ENCODE measurements at regions of chr17 and their contacts with region 1.

Region 1: DNA sequence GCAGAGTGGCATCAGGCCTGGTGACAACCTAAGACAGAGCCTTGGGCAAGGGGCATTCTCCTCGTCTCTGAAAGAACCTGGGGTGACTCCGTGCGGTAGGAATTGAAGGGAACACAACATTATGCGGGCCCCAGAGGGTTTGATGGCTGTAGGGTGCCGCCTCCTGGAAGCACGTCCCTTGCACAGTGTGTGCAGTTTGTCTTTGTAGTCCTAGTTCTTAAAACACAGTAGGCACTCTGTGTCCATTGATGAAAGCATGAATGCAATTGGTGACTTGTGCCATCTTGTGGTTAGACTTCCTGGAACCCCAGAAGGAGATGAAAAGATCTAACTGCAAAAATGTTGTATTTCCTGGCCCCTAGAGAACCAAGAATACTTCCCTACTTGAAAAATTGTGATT is 279.8 kb downstream of the UTP18 start:
- DNase-seq: peak in 1 of 2 experiments; percentile 20
- ATAC-seq: peak in 1 of 2 experiments; percentile 19; a peak in 2 of 6 replicates
- H3K4me3 ChIP-seq: no peak overlapping the region
- H3K27ac ChIP-seq: no peak overlapping the region
- H3K4me1 ChIP-seq: peaks cover 4% of the 10 kb centered on the region; the same call in 2 of the 3 replicates
- CTCF ChIP-seq: no peak
- EP300 ChIP-seq: no peak
- POLR2A ChIP-seq: no peak
- RAD21 ChIP-seq: peak in 1 of 2 experiments; percentile 62; a peak in 2 of 5 replicates

Region 2: DNA sequence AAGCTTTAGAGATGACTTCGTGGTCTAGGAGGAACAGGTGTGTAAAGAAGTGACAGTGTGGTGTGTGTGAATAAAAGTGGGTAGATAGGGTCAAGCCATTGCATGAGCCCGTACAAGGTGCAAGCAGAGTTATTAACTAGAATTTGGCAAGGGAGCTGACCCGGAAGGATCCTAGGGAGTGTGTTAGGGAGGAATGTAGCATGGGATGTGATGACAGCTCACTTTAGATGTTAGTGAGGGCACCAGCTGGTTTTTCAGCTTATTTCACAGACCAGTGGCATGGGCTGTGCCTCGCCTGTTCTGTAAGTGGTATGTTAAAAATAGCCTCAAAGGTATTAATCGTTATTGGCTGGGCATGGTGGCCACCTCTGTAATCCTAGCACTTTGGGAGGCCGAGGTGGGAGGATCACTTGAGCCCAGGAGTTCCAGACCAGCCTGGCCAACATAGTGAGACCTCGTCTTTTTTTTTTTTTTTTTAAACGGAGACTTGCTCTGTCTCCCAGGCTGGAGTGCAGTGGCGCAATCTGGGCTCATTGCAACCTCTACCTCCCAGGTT is 781.1 kb before region 1 on chr17:
- CTCF ChIA-PET with region 1: no interaction called
- POLR2A ChIA-PET with region 1: no interaction called
- DNase-seq: no peak
- ATAC-seq: peak; percentile 7 to 23; a peak in 4 of 6 replicates
- H3K4me3 ChIP-seq: no peak overlapping the region
- H3K27ac ChIP-seq: no peak overlapping the region
- H3K4me1 ChIP-seq: peaks cover 23% of the 10 kb centered on the region
- CTCF ChIP-seq: no peak
- EP300 ChIP-seq: no peak
- POLR2A ChIP-seq: no peak
- RAD21 ChIP-seq: no peak

Region 3: DNA sequence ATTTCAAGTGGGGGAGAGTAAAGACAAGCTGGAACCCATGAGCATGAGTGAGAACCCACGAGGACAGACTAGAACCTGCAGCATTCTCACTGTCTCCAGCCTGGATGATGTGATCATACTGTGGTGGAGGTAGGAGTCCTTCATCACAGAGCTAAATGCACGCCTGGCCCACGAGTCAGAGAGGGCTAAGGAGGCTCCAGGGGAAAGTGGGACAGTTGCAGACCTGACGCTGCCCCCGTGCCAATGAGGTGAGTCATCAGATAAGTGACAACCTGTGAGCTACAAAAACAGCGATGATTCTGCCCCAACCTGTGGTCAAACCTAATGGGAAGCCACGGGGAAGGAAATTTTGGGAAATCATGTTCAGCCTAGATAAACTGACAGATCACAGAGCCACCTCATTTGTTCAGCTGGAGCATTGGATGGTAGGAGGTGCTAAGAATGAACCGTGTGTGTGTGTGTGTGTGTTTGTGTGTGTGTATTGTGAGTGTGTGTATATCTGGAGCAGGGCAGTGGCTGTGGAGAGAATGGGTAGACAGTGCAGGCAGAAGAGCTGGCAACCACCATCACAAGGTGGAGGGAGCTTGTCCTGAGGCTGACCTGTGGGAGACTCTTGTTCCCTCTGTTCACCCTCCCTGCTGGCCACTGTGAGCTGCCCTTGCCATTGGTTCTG is 148.0 kb before region 1 on chr17:
- CTCF ChIA-PET with region 1: interaction called, 11 read pairs
- POLR2A ChIA-PET with region 1: no interaction called
- DNase-seq: peak in 1 of 2 experiments; percentile 28
- ATAC-seq: peak; percentile 40 to 60; a peak in 3 of 6 replicates
- H3K4me3 ChIP-seq: no peak overlapping the region
- H3K27ac ChIP-seq: peak overlapping the region; percentile 15 to 19; a peak in 3 of 6 replicates
- H3K4me1 ChIP-seq: peaks cover 18% of the 10 kb centered on the region
- CTCF ChIP-seq: no peak
- EP300 ChIP-seq: no peak
- POLR2A ChIP-seq: no peak
- RAD21 ChIP-seq: no peak

Region 4: DNA sequence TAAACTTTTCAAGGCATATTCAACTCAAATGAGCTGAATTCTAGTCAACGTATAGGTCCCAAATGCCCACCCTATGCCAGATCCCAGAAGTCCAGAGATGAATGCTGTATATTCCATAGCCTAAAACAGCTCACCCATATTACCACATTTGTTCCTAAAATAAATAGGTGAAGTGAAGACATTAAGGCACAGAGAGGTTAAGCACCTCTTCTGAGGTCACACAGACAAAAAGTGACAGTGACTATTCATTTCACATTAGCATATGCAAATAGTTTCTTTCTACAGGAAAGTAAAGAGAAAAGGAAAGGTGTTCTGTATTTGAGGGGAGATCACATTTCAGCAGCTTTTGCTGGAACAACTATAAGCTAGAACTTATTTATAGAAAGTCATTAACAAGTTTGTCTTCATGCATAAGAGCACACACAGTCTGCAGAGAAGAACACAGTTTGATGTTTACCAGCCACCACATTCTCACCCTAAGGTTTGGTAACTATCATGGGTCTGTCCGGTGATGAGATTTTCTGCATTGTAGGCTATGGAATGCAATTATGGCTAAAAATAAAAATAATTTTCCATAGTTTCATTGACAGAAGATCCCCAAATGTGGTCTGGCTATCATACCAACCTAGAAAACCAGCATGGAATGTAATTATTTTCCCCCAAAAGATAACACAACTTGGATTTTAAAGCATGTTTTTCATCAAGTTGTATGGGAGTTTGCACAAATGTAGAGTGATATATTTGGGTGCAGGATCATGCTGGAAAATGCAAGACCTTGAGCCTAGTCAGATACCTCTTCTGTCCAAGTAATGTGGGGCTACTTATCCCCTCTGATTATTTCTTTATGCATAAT is 122.3 kb after region 1 on chr17:
- CTCF ChIA-PET with region 1: no interaction called
- POLR2A ChIA-PET with region 1: no interaction called
- DNase-seq: no peak
- ATAC-seq: no peak
- H3K4me3 ChIP-seq: no peak overlapping the region
- H3K27ac ChIP-seq: no peak overlapping the region
- H3K4me1 ChIP-seq: no peaks in the 10 kb centered on the region
- CTCF ChIP-seq: no peak
- EP300 ChIP-seq: no peak
- POLR2A ChIP-seq: no peak
- RAD21 ChIP-seq: no peak

Measured in A549 (cell line).